Natural killer cell (primary cell): ENCODE measurements at regions of chr6 and their contacts with region 1.

Region 1: GRCh38 chr6:31652925-31653718 is 661 bp upstream of the BAG6 start:
- DNase-seq: no peak
- ATAC-seq: peak; percentile 72 to 84 (median 73)
- H3K4me3 ChIP-seq: peak overlapping the region; percentile 90
- H3K4me3 Mint-ChIP-seq: peak overlapping the region; percentile 95
- H3K27ac ChIP-seq: peak overlapping the region; percentile 99
- H3K27ac Mint-ChIP-seq: peak overlapping the region; percentile 95 to 96
- H3K4me1 ChIP-seq: peaks cover 32% of the 10 kb centered on the region
- H3K4me1 Mint-ChIP-seq: peaks cover 49 to 60% of the 10 kb centered on the region in 2 donors
- H3K27me3 ChIP-seq: no peaks in the 10 kb centered on the region
- H3K27me3 Mint-ChIP-seq: no peaks in the 10 kb centered on the region
- CTCF ChIP-seq: no peak

Region 2: DNA sequence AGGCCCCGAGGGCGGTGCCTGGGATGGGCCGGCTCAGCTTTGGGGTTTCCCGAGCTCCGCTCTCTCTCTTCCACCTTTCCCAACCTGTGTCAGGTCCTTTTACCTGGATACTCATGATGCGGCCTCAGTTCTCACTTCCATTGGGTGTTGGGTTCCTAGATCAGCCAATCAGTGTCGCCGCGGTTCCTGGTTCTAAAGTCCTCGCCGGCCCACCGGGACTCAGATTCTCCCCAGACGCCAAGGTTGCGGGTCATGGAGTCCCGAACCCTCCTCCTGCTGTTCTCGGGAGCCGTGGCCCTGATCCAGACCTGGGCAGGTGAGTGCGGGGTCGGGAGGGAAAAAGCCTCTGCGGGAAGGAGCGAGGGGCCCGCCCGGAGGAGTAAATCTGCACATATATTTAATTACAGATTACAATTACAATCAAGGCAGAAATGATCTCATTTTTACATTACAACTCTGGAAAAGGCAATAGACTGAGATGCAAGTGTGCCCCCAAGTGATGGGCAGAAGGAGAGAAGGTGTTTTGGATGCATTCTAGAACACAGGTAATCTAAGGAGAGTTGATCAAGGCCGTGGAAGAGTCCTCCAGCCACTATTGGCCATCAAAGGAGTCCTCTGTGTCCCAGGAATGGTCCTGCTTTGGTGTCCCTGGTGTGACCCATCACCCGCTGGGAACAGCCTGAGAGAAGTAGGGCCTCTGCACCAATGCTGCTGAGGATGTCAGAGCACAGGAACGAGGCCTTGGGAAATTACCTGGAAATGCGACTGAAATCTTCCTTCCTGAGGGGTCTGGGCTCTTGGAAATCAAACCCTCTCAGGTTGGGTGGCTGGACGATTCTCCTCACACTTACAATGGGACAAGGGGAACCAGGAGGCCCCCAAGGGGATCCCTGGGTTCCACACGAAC is 189.9 kb before region 1 on chr6:
- intact Hi-C with region 1: no loop called
- DNase-seq: peak; percentile 59 to 93
- ATAC-seq: peak; percentile 88 to 94 (median 91)
- H3K4me3 ChIP-seq: peak overlapping the region; percentile 87
- H3K4me3 Mint-ChIP-seq: peak overlapping the region; percentile 100
- H3K27ac ChIP-seq: peak overlapping the region; percentile 91
- H3K27ac Mint-ChIP-seq: peak overlapping the region; percentile 99 to 100
- H3K4me1 ChIP-seq: peaks cover 55% of the 10 kb centered on the region
- H3K4me1 Mint-ChIP-seq: peaks cover 64 to 66% of the 10 kb centered on the region in 2 donors
- H3K27me3 ChIP-seq: no peaks in the 10 kb centered on the region
- H3K27me3 Mint-ChIP-seq: peaks cover 0 to 3% of the 10 kb centered on the region in 2 donors
- CTCF ChIP-seq: no peak

Region 3: DNA sequence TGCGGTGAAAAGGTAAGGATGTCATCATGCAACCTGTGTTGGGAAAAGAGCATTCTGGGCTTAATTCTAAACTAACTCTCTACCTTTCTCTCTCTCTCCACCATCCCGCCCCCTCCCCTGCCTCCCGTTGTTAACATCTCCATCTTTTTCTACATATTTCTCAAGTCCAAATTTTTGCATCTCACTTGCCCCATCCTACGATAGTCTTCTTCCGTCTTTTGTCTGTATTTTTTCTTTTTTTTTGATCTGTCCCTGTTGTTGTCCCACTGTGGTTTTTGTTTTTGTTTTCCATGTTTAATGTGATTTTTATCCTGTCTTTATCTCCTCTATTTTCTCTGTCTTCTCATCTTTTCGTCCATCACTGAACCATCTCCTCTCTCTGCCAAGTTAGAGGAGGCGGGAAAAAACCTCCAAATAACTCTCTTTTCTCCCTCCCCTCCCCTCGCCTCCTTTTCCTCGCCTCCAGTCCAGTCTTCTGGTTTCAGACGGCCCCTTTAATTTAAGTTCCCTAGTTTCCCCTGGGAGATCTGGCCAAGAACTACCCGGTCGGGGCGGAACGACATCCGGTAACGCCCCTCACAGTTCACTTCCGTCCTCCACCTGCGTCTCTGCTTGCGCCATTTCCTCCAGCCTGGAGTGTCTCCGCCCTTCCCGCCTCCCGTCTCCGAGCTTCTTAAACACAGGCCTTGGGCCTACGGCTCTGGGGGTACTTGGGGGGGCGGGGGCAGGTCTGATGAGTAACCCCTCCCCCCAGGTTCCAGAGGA is 106.0 kb before region 1 on chr6 and contains the start of gene NFKBIL1:
- intact Hi-C with region 1: loop called (anchors 1 kb)
- DNase-seq: peak; percentile 76 to 96
- ATAC-seq: peak; percentile 89 to 96 (median 91)
- H3K4me3 ChIP-seq: peak within 1 kb of the TSS; percentile 38
- H3K4me3 Mint-ChIP-seq: peak within 1 kb of the TSS; percentile 95
- H3K27ac ChIP-seq: peak within 1 kb of the TSS; percentile 87
- H3K27ac Mint-ChIP-seq: peak within 1 kb of the TSS; percentile 90 to 97
- H3K4me1 ChIP-seq: peaks cover 40% of the 10 kb centered on the region
- H3K4me1 Mint-ChIP-seq: peaks cover 32 to 41% of the 10 kb centered on the region in 2 donors
- H3K27me3 ChIP-seq: no peaks in the 10 kb centered on the region
- H3K27me3 Mint-ChIP-seq: no peaks in the 10 kb centered on the region
- CTCF ChIP-seq: peak; percentile 31
- total RNA-seq, gene NFKBIL1: 8.1 to 10.9 (median 10.7) TPM

Region 4: GRCh38 chr6:31619805-31620585 is 33.1 kb before region 1 on chr6:
- intact Hi-C with region 1: loop called (anchors 1 kb)
- DNase-seq: peak; percentile 93 to 99
- ATAC-seq: peak; percentile 80 to 94 (median 84)
- H3K4me3 ChIP-seq: peak overlapping the region; percentile 91
- H3K4me3 Mint-ChIP-seq: peak overlapping the region; percentile 92
- H3K27ac ChIP-seq: peak overlapping the region; percentile 98
- H3K27ac Mint-ChIP-seq: peak overlapping the region; percentile 92 to 95
- H3K4me1 ChIP-seq: peaks cover 29% of the 10 kb centered on the region
- H3K4me1 Mint-ChIP-seq: peaks cover 20 to 25% of the 10 kb centered on the region in 2 donors
- H3K27me3 ChIP-seq: no peaks in the 10 kb centered on the region
- H3K27me3 Mint-ChIP-seq: no peaks in the 10 kb centered on the region
- CTCF ChIP-seq: no peak

Region 5: GRCh38 chr6:31702819-31703522 is 49.8 kb after region 1 on chr6 and contains the start of gene ABHD16A:
- intact Hi-C with region 1: loop called (anchors 5 kb)
- DNase-seq: peak; percentile 97 to 99
- ATAC-seq: peak; percentile 93 to 97 (median 95)
- H3K4me3 ChIP-seq: peak within 1 kb of the TSS; percentile 80
- H3K4me3 Mint-ChIP-seq: peak within 1 kb of the TSS; percentile 99
- H3K27ac ChIP-seq: peak within 1 kb of the TSS; percentile 98
- H3K27ac Mint-ChIP-seq: peak within 1 kb of the TSS; percentile 96 to 98
- H3K4me1 ChIP-seq: peaks cover 28% of the 10 kb centered on the region
- H3K4me1 Mint-ChIP-seq: peaks cover 24 to 27% of the 10 kb centered on the region in 2 donors
- H3K27me3 ChIP-seq: no peaks in the 10 kb centered on the region
- H3K27me3 Mint-ChIP-seq: no peaks in the 10 kb centered on the region
- CTCF ChIP-seq: no peak
- total RNA-seq, gene ABHD16A: 92.0 to 97.6 (median 94.2) TPM